Vagina (tissue), 2 donors: ENCODE measurements at regions of chr10 and their contacts with region 1.

Region 1: DNA sequence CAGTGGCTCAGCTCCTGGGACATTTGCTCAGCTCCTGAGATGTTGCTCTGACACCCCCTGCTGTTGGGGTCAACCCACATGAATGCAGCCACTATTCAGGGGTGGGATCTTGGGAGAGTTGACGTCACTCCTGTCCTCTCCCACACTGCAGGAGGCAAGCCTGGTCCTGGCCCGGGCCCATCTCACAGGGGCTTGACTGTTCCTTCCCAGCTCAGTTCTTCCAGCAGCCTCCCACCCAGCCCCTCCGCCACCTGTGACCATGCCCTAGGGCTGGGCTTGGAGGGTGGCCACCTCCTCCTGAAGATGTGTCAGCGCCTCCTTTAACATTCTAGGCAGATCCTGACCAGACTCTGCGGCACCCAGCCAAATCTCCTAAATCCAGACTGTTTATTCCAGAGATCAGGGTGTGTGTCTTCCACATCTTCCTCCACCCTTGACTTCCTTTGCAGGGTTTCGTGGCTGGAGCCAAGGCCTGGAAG is 19.1 kb upstream of the OPALIN start:
- DNase-seq: no peak
- H3K4me3 ChIP-seq: no peak overlapping the region
- H3K27ac ChIP-seq: no peak overlapping the region
- H3K4me1 ChIP-seq: peaks cover 21% of the 10 kb centered on the region
- H3K27me3 ChIP-seq: no peaks in the 10 kb centered on the region
- CTCF ChIP-seq: no peak
- POLR2A ChIP-seq: no peak

Region 2: DNA sequence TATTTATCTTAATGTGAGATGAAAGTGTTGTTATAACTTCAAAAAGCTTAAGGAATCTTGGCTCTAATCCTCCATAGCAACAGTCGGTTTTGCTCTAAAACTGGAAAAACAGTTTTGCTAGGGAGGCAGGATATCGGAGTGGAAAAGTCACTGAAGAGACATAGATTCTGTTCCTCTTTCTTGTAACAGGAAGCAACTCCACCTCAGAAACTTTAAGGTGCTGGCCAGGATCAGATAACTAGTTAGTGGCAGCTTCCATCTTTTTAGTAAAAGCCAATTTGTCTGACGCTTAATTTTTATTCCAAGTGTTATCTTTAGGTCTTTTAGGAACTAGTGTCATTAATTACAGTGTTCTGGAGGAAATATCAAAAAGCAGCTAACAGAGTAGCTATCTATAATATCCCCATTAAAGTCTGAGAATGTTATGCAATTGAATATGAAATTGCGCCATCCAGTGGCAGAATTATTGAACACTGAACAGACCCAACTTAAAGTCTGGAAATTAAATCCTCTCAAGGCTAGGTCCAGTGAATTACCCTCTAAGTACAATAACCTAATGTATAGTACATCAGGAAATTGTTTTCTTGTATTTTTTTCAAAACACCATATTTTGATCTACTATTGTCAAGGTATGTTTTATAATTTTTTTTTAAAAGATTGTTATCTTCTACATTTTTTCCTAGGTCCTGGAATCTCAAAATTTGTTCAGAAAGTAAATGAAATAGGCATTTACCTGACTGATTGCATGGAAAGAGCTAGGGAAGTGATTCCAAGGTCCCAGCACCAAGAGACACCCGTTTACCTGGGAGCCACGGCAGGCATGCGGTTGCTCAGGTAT is 536.0 kb before region 1 on chr10:
- intact Hi-C with region 1: no loop called
- DNase-seq: no peak
- H3K4me3 ChIP-seq: no peak overlapping the region
- H3K27ac ChIP-seq: peak overlapping the region; percentile 47
- H3K4me1 ChIP-seq: peaks cover 48% of the 10 kb centered on the region
- H3K27me3 ChIP-seq: no peaks in the 10 kb centered on the region
- CTCF ChIP-seq: peak in 1 of 3 experiments; percentile 71
- POLR2A ChIP-seq: no peak

Region 3: GRCh38 chr10:96341219-96342182 is 36.4 kb before region 1 on chr10:
- intact Hi-C with region 1: loop called (anchors 2 kb)
- DNase-seq: no peak
- H3K4me3 ChIP-seq: no peak overlapping the region
- H3K27ac ChIP-seq: no peak overlapping the region
- H3K4me1 ChIP-seq: no peaks in the 10 kb centered on the region
- H3K27me3 ChIP-seq: no peaks in the 10 kb centered on the region
- CTCF ChIP-seq: no peak
- POLR2A ChIP-seq: no peak

Region 4: DNA sequence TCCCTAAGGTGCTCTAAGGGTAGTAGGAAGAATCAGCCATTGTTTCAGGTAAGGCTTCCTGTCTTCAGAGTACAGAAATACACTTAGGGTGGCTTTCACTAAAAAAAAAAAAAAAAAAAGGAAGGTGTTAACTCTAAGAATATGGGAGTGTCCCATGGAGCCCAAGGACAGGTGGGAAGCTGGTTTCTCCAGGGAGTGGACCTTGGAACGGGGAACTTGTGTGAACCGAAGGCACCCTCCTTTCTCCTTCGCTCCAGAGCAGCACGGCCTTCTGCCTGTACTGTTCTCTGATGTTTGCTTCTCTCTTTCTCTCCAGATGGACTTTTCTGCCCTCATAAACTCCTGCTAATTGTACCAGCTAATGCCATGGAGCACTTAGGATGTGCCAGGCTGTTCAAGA is 25.3 kb before region 1 on chr10:
- intact Hi-C with region 1: no loop called
- DNase-seq: no peak
- H3K4me3 ChIP-seq: no peak overlapping the region
- H3K27ac ChIP-seq: no peak overlapping the region
- H3K4me1 ChIP-seq: no peaks in the 10 kb centered on the region
- H3K27me3 ChIP-seq: no peaks in the 10 kb centered on the region
- CTCF ChIP-seq: no peak
- POLR2A ChIP-seq: no peak